Activated CD8-positive, alpha-beta T cell treated with anti-CD3 and anti-CD28 coated beads for 36 hours (primary cell): ENCODE measurements at regions of chr20 and their contacts with region 1.

Region 1: GRCh38 chr20:54207743-54208547 is at the start of gene PFDN4:
- DNase-seq: peak; percentile 84
- ATAC-seq: peak; percentile 91
- H3K4me3 Mint-ChIP-seq: peak within 1 kb of the TSS; percentile 83
- H3K27ac Mint-ChIP-seq: peak within 1 kb of the TSS; percentile 100
- H3K4me1 Mint-ChIP-seq: peaks cover 35% of the 10 kb centered on the region
- H3K27me3 Mint-ChIP-seq: no peaks in the 10 kb centered on the region
- CTCF ChIP-seq: peak; percentile 81
- total RNA-seq, gene PFDN4: 31.1 to 37.4 TPM

Region 2: DNA sequence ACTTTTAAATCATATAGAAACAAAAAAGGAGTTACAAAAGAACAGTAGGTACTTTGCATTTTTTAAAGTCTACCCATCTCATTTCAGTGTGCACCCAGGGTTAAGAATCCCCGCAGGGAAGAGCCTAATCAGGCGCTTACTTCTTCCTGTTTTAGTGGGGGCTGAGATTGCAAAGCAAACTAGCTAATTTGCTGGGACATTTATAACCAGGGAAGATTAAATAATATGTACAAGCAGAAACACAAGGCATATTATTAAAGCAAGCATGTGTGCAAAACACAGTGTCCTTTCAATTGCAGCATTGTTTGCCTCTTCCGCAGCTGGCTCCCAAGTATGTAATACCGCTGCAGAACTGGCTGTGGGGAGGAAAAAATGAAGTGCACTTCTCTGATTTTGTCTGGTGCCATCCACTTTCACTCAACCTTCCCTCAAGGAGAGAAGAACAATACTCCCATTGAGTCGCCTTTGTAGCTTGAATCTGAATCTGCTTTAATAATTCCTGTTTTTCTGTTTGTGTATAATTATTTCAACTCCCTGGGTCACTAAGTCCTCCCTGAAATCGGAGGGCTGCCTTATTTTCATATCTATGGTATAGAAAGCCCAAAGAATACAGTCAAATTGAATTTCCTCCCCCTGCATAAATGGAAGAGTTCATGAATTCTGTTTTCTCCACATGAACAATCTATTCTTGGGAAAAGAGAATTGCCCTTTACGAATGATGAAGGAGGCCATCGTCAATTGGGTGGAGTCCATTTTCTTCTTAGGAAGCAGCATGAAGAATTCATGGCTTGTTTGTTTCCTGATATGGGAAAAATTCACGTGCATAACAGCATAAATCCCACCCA is 114.3 kb before region 1 on chr20:
- CTCF ChIA-PET with region 1: interaction called, 17 read pairs
- POLR2A ChIA-PET with region 1: no interaction called
- intact Hi-C with region 1: no loop called
- DNase-seq: no peak
- ATAC-seq: no peak
- H3K4me3 Mint-ChIP-seq: no peak overlapping the region
- H3K27ac Mint-ChIP-seq: no peak overlapping the region
- H3K4me1 Mint-ChIP-seq: no peaks in the 10 kb centered on the region
- H3K27me3 Mint-ChIP-seq: no peaks in the 10 kb centered on the region
- CTCF ChIP-seq: no peak